A549 (cell line): ENCODE measurements at regions of chr1 and their contacts with region 1.

Region 1: GRCh38 chr1:214551436-214552173 is at the start of gene PTPN14:
- DNase-seq: peak; percentile 91 to 94
- ATAC-seq: peak; percentile 83 to 84
- H3K4me3 ChIP-seq: peak within 1 kb of the TSS; percentile 85
- H3K27ac ChIP-seq: peak within 1 kb of the TSS; percentile 93 to 97
- H3K4me1 ChIP-seq: peaks cover 46% of the 10 kb centered on the region
- CTCF ChIP-seq: peak; percentile 17; the same call in 2 of the 3 replicates
- EP300 ChIP-seq: no peak
- POLR2A ChIP-seq: no peak; the same call in 1 of the 2 replicates
- RAD21 ChIP-seq: peak; percentile 14 to 15; a peak in 1 of 5 replicates
- polyA plus RNA-seq, gene PTPN14: 9.9 and 10.0 TPM in 2 replicates

Region 2: DNA sequence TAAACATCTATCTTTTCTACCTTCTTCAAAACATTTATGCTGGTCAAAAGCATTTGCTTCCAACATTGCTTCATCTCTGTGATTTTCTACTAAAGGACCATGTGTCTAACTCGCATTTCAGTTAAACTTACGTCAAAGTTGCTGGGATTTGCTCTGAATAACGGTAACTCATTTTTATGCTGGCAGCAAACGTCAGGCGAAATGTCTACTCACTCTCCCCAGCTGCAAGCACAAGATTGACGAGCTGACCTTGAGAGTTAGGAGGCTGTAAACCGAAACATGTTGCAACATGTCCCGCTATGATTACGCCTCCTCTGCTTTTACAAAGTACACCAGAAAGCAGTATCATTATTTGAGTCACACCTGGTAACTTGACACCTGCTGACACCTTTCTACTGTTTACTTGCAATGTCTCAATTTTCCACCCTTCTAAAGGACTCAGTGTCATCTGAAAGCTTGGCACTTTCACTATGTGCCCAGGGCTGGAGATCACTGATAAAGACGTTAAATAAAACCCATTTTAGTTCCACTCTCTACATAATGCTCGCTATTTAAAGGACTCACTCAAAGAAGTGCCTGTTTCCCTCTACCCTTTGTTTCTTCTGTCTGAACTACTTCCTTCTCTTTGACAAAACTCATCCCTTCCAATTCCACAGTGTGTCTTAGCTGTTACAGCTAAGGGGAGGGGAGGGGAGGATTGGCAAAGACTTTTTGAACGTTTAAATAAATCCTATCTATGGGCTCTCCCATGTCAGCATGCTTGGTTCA is 112.1 kb before region 1 on chr1:
- CTCF ChIA-PET with region 1: interaction called, 5 read pairs
- POLR2A ChIA-PET with region 1: interaction called, 10 read pairs
- DNase-seq: peak in 1 of 2 experiments; percentile 76
- ATAC-seq: peak; percentile 64 to 70
- H3K4me3 ChIP-seq: peak overlapping the region; percentile 30; the same call in 2 of the 3 replicates
- H3K27ac ChIP-seq: peak overlapping the region; percentile 56 to 85
- H3K4me1 ChIP-seq: peaks cover 48% of the 10 kb centered on the region
- CTCF ChIP-seq: no peak
- EP300 ChIP-seq: peak in 1 of 2 experiments; percentile 56; a peak in 1 of 5 replicates
- POLR2A ChIP-seq: no peak
- RAD21 ChIP-seq: no peak

Region 3: DNA sequence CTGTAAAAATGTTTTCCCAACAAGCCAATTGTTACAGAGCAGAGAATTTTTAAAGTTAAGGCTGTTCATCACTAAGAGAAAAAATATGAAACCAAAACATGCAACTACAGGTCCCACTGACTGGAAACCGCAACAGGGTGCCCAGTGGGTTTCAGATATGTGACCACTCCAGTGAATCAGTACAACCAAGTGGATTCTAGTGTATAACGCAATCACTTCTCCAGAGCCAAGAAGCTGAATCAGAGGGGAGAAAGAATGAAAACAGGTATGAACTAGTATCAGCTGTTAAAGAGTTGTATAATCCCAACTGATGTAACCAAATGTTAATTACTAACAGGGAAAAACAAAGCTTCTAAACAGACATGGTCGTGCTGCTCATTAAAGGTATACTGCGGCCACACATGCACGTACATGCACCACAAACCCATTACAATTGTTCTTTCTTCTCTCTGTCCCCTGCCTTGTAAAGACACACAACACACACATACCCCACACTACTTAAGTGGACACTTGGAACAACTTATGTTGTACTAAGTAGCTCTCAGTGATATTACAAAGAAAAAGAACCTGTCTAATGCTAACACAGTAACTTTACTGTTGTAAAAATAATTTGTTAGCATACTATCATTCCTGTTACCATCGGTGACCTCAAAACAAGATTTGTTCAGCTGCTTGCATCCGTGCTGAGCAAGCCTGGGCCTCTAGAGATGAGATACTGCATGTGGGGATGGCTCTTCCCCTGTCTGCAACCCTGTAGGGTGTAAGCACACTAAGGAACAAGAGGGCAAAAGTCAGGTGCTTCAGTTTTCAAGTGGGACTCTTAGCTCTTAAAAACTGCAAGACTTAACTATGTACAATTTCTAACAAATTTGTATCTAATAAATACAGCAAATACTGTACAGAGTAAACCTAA is 74.4 kb before region 1 on chr1:
- CTCF ChIA-PET with region 1: interaction called, 3 read pairs
- POLR2A ChIA-PET with region 1: interaction called, 14 read pairs
- DNase-seq: no peak
- ATAC-seq: peak in 1 of 2 experiments; percentile 33; a peak in 2 of 6 replicates
- H3K4me3 ChIP-seq: no peak overlapping the region
- H3K27ac ChIP-seq: peak overlapping the region in 1 of 2 experiments; percentile 52; a peak in 3 of 6 replicates
- H3K4me1 ChIP-seq: peaks cover 66% of the 10 kb centered on the region
- CTCF ChIP-seq: no peak
- EP300 ChIP-seq: no peak
- POLR2A ChIP-seq: no peak
- RAD21 ChIP-seq: no peak

Region 4: DNA sequence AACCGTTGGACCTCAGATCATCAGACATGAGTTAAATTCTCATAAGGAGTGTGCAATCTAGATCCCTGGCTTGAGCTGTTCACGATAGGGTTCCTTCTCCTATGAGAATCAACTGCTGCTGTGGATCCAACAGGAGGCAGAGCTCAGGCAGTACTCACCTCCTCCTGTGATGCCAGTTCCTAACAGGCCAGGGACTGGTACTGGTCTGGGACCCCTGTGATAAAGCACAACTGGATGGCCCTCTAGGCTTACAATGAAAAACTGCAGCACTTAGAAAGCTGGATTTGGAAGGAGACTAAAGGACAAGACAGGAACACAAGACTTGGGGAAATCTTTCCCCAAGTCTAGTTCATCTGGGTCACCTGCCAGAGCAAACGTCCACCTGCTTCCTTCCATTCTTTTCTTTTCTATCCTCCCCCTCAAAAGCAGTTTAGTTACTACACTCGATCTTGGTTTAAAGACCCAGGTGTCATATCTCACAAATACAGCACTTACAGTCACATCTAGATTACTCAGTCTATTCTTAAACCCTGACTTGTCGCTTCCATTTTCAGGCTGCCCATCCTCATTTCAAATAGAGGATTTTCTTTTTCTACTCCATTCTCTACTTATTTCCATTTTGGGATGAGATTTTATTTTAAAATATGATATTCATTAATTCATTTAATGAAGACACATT is 60.0 kb before region 1 on chr1:
- CTCF ChIA-PET with region 1: no interaction called
- POLR2A ChIA-PET with region 1: no interaction called
- DNase-seq: no peak
- ATAC-seq: peak; percentile 59 to 68; a peak in 4 of 6 replicates
- H3K4me3 ChIP-seq: no peak overlapping the region
- H3K27ac ChIP-seq: no peak overlapping the region
- H3K4me1 ChIP-seq: peaks cover 22% of the 10 kb centered on the region
- CTCF ChIP-seq: no peak
- EP300 ChIP-seq: no peak
- POLR2A ChIP-seq: no peak
- RAD21 ChIP-seq: no peak

Region 5: GRCh38 chr1:214566158-214567104 is 14.8 kb after region 1 on chr1:
- CTCF ChIA-PET with region 1: interaction called, 8 read pairs
- POLR2A ChIA-PET with region 1: interaction called, 12 read pairs
- DNase-seq: peak; percentile 54 to 66
- ATAC-seq: peak; percentile 85 to 89
- H3K4me3 ChIP-seq: no peak overlapping the region
- H3K27ac ChIP-seq: peak overlapping the region; percentile 56 to 77
- H3K4me1 ChIP-seq: peaks cover 72% of the 10 kb centered on the region
- CTCF ChIP-seq: no peak
- EP300 ChIP-seq: peak in 1 of 2 experiments; percentile 52; a peak in 1 of 5 replicates
- POLR2A ChIP-seq: no peak
- RAD21 ChIP-seq: peak in 1 of 2 experiments; percentile 18; a peak in 1 of 5 replicates